GM12878 (cell line): ENCODE measurements at regions of chr3 and their contacts with region 1.

Region 1: GRCh38 chr3:46866720-46867549 is 3.7 kb upstream of the MYL3 start:
- DNase-seq: no peak
- ATAC-seq: peak; percentile 87
- H3K4me3 ChIP-seq: no peak overlapping the region
- H3K27ac ChIP-seq: no peak overlapping the region
- H3K4me1 ChIP-seq: no peaks in the 10 kb centered on the region
- H3K27me3 ChIP-seq: no peaks in the 10 kb centered on the region; a peak in 1 of 4 replicates
- CTCF ChIP-seq: peak; percentile 91 to 92 (median 92)
- EP300 ChIP-seq: no peak
- POLR2A ChIP-seq: no peak
- RAD21 ChIP-seq: peak; percentile 80

Region 2: DNA sequence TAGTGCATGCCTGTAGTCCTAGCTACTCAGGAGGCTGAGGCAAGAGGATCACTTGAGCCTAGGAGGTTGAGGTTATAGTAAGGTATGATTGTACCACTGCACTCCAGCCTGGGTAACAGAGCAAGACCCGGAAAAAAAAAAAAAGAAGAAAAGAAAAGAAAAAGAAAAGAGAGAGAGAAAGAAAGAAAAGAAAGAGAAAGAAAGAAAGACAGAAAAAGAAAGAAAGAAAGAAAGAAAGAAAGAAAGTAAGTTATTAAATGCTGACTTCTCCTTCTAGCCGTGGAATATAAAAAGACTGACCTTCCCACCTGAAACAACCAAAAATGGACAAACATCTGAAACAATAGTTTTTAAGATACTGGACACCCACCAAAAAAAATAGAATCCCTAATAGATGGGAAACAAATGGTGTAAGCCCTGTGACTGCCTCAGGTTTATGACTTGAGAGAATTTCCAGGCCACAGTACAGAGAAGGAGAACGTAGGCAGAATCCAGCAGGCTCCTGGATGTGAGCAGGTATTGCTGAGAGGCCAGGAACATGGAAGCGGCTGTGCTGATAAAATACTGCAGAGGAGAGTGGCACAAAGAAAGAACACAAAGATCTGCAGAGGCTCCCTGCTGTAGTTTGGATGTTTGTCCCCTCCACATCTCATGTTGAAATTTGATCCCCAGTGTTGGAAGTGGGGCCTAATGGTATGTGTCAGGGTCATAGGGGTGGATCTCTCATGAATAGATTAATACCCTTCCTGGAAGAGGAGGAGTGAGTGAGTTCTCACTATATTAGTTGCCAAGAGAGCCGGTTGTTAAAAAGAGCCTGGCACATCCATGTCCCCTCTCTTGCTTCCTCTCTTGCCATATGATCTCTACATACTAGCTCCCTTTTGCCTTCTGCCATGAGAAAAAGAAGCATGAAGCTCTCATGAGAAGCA is 107.4 kb before region 1 on chr3:
- CTCF ChIA-PET with region 1: no interaction called
- POLR2A ChIA-PET with region 1: no interaction called
- RAD21 ChIA-PET with region 1: no interaction called
- SMC1A ChIA-PET with region 1: no interaction called
- in situ Hi-C with region 1: no loop called
- intact Hi-C with region 1: no loop called
- DNase-seq: no peak
- ATAC-seq: no peak
- H3K4me3 ChIP-seq: no peak overlapping the region
- H3K27ac ChIP-seq: no peak overlapping the region
- H3K4me1 ChIP-seq: no peaks in the 10 kb centered on the region
- H3K27me3 ChIP-seq: no peaks in the 10 kb centered on the region
- CTCF ChIP-seq: no peak
- EP300 ChIP-seq: no peak
- POLR2A ChIP-seq: no peak
- RAD21 ChIP-seq: no peak

Region 3: GRCh38 chr3:46797458-46797857 is 69.5 kb before region 1 on chr3:
- CTCF ChIA-PET with region 1: no interaction called
- POLR2A ChIA-PET with region 1: no interaction called
- RAD21 ChIA-PET with region 1: no interaction called
- SMC1A ChIA-PET with region 1: no interaction called
- in situ Hi-C with region 1: no loop called
- intact Hi-C with region 1: no loop called
- DNase-seq: no peak
- ATAC-seq: no peak
- H3K4me3 ChIP-seq: no peak overlapping the region
- H3K27ac ChIP-seq: no peak overlapping the region
- H3K4me1 ChIP-seq: no peaks in the 10 kb centered on the region
- H3K27me3 ChIP-seq: no peaks in the 10 kb centered on the region
- CTCF ChIP-seq: no peak
- EP300 ChIP-seq: no peak
- POLR2A ChIP-seq: no peak
- RAD21 ChIP-seq: no peak

Region 4: GRCh38 chr3:46878789-46879436 is 12.0 kb after region 1 on chr3:
- CTCF ChIA-PET with region 1: interaction called, 13 read pairs
- POLR2A ChIA-PET with region 1: interaction called, 3 read pairs
- RAD21 ChIA-PET with region 1: no interaction called
- SMC1A ChIA-PET with region 1: no interaction called
- in situ Hi-C with region 1: no loop called
- intact Hi-C with region 1: no loop called
- DNase-seq: peak; percentile 24
- ATAC-seq: peak; percentile 56
- H3K4me3 ChIP-seq: no peak overlapping the region
- H3K27ac ChIP-seq: no peak overlapping the region
- H3K4me1 ChIP-seq: peaks cover 2% of the 10 kb centered on the region
- H3K27me3 ChIP-seq: peaks cover 7 to 8% of the 10 kb centered on the region in 2 experiments
- CTCF ChIP-seq: no peak
- EP300 ChIP-seq: no peak
- POLR2A ChIP-seq: no peak
- RAD21 ChIP-seq: no peak

Region 5: GRCh38 chr3:46895204-46895660 is 28.3 kb after region 1 on chr3:
- CTCF ChIA-PET with region 1: interaction called, 35 read pairs
- POLR2A ChIA-PET with region 1: no interaction called
- RAD21 ChIA-PET with region 1: interaction called, 10 read pairs
- SMC1A ChIA-PET with region 1: interaction called, 16 read pairs
- in situ Hi-C with region 1: no loop called
- intact Hi-C with region 1: loop called (anchors 1 kb)
- DNase-seq: peak; percentile 34
- ATAC-seq: peak; percentile 87
- H3K4me3 ChIP-seq: no peak overlapping the region
- H3K27ac ChIP-seq: no peak overlapping the region
- H3K4me1 ChIP-seq: no peaks in the 10 kb centered on the region; the same call in 1 of the 2 replicates
- H3K27me3 ChIP-seq: peaks cover 2 to 3% of the 10 kb centered on the region in 2 experiments; a peak in 3 of 4 replicates
- CTCF ChIP-seq: peak; percentile 92 to 93 (median 92); a peak in 5 of 6 replicates
- EP300 ChIP-seq: no peak
- POLR2A ChIP-seq: no peak
- RAD21 ChIP-seq: peak; percentile 79

Region 6: GRCh38 chr3:46909535-46910442 is 42.9 kb after region 1 on chr3:
- CTCF ChIA-PET with region 1: interaction called, 20 read pairs
- POLR2A ChIA-PET with region 1: no interaction called
- RAD21 ChIA-PET with region 1: interaction called, 7 read pairs
- SMC1A ChIA-PET with region 1: interaction called, 5 read pairs
- in situ Hi-C with region 1: no loop called
- intact Hi-C with region 1: loop called (anchors 1 kb)
- DNase-seq: no peak
- ATAC-seq: peak; percentile 93
- H3K4me3 ChIP-seq: no peak overlapping the region
- H3K27ac ChIP-seq: no peak overlapping the region
- H3K4me1 ChIP-seq: peaks cover 5% of the 10 kb centered on the region
- H3K27me3 ChIP-seq: no peaks in the 10 kb centered on the region
- CTCF ChIP-seq: peak; percentile 88 to 93 (median 88)
- EP300 ChIP-seq: no peak
- POLR2A ChIP-seq: peak; percentile 46; the same call in 1 of the 2 replicates
- RAD21 ChIP-seq: peak; percentile 84

Region 7: GRCh38 chr3:46998121-46998851 is 131.4 kb after region 1 on chr3:
- CTCF ChIA-PET with region 1: no interaction called
- POLR2A ChIA-PET with region 1: no interaction called
- RAD21 ChIA-PET with region 1: no interaction called
- SMC1A ChIA-PET with region 1: no interaction called
- in situ Hi-C with region 1: no loop called
- intact Hi-C with region 1: loop called (anchors 2 kb)
- DNase-seq: no peak
- ATAC-seq: peak; percentile 85
- H3K4me3 ChIP-seq: no peak overlapping the region
- H3K27ac ChIP-seq: no peak overlapping the region
- H3K4me1 ChIP-seq: no peaks in the 10 kb centered on the region
- H3K27me3 ChIP-seq: no peaks in the 10 kb centered on the region
- CTCF ChIP-seq: peak; percentile 83 to 91 (median 86)
- EP300 ChIP-seq: no peak
- POLR2A ChIP-seq: no peak
- RAD21 ChIP-seq: peak; percentile 93

Region 8: DNA sequence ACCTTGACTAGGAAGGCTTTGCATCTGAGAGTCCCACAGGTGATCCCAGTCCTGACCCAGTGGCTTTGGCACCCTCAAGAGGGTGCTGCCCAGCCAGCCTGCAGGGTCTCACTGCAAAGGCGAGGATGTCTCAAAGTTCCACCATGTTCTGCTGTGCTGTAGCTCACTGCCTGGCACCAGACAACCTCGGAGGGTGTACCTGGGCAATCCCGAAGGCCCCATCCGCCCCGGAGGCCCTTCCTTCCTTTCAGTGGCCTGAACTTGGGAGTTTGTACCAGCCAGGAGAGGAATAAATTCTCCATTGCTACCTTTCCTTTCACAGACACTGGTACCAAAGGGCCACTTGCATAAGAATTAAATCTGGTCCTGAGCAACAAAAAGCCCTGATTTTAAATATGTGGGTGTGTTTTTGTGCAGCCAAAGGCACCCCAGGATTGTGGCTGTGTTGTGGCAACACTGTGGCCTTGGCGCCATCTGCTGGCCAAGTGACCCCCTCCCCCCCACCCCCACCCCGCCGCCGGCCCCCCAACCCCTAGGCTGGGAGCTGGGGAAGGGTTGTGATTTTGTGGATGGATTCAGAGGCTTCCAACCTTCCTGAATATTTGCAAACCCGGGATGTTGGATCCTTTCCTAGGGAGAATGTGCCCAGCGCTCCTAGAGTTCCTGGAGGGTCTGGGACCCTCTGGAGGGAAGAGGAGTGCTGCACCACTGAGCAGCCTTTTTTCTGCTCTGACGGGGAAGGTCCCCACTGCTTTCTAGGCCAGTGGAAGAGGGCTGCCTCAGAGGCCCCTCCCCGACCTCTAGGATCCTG is 504.2 kb after region 1 on chr3:
- CTCF ChIA-PET with region 1: interaction called, 11 read pairs
- POLR2A ChIA-PET with region 1: no interaction called
- RAD21 ChIA-PET with region 1: no interaction called
- SMC1A ChIA-PET with region 1: no interaction called
- in situ Hi-C with region 1: no loop called
- intact Hi-C with region 1: loop called (anchors 2 kb)
- DNase-seq: no peak
- ATAC-seq: peak; percentile 87
- H3K4me3 ChIP-seq: no peak overlapping the region
- H3K27ac ChIP-seq: no peak overlapping the region
- H3K4me1 ChIP-seq: no peaks in the 10 kb centered on the region
- H3K27me3 ChIP-seq: no peaks in the 10 kb centered on the region
- CTCF ChIP-seq: peak; percentile 34 to 52 (median 43); a peak in 4 of 6 replicates
- EP300 ChIP-seq: no peak
- POLR2A ChIP-seq: no peak
- RAD21 ChIP-seq: peak; percentile 54